ENCODE measurements at regions of chr7 and their contacts with region 1.

Region 1: DNA sequence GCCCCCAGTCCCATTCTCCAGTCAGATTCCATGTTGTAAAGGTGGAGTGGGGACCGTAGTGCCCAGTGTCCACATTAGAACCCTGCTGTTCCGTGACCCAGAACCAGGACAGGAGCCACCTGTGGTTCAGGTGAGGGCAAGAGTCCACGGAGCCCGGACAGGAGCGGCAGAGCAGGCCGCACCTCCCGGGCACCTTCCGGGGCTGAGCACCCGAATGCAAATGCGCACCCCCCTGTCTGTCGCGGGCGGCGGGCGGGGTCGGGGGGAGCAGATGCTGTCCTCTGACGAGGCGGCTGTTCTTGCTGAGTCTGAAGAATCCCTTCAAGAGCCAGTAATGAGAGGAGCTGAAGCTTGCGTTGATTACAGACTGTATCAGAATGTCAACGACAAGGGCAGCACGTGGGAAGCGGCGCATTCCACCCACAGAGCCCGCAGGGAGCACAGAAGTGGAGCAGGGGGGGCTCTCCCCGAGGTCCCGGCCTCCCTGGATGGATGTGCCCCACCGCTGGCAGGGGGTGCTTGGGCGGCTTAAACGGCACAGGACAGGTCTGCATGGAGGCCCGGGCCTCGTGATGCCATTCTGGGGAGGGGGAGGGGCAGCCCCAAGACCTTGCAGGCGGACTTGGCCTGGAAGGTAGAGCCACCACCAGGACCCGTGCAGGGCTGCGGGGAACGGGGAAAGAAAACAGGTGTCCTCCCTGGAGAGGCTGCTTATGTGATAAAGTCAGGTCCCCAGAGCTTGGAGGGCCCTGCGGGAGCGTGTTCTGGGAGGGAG is 407.5 kb upstream of the RNF32 start:
- DNase-seq: no peak
- ATAC-seq: no peak
- H3K4me3 ChIP-seq: no peak overlapping the region
- H3K27ac ChIP-seq: no peak overlapping the region
- H3K4me1 ChIP-seq: no peaks in the 10 kb centered on the region
- H3K27me3 ChIP-seq: no peaks in the 10 kb centered on the region
- CTCF ChIP-seq: no peak
- POLR2A ChIP-seq: no peak

Region 2: GRCh38 chr7:155227981-155228811 is 1004.9 kb before region 1 on chr7:
- intact Hi-C with region 1: loop called in 1 of 10 experiments (anchors 10 kb)
- DNase-seq: peak in 2 of 5 donors; percentile 39 to 50
- ATAC-seq: peak in 1 of 4 donors; percentile 67
- H3K4me3 ChIP-seq: no peak overlapping the region
- H3K27ac ChIP-seq: no peak overlapping the region
- H3K4me1 ChIP-seq: no peaks in the 10 kb centered on the region
- H3K27me3 ChIP-seq: peaks cover 0 to 20% (median 0%) of the 10 kb centered on the region in 9 donors
- CTCF ChIP-seq: no peak
- POLR2A ChIP-seq: no peak

Region 3: GRCh38 chr7:155965015-155965414 is 268.1 kb before region 1 on chr7:
- intact Hi-C with region 1: loop called in 1 of 10 experiments (anchors 5 kb)
- DNase-seq: no peak
- ATAC-seq: no peak
- H3K4me3 ChIP-seq: no peak overlapping the region
- H3K27ac ChIP-seq: no peak overlapping the region
- H3K4me1 ChIP-seq: no peaks in the 10 kb centered on the region
- H3K27me3 ChIP-seq: peaks cover 0 to 9% (median 3%) of the 10 kb centered on the region in 9 donors
- CTCF ChIP-seq: no peak
- POLR2A ChIP-seq: no peak

Region 4: DNA sequence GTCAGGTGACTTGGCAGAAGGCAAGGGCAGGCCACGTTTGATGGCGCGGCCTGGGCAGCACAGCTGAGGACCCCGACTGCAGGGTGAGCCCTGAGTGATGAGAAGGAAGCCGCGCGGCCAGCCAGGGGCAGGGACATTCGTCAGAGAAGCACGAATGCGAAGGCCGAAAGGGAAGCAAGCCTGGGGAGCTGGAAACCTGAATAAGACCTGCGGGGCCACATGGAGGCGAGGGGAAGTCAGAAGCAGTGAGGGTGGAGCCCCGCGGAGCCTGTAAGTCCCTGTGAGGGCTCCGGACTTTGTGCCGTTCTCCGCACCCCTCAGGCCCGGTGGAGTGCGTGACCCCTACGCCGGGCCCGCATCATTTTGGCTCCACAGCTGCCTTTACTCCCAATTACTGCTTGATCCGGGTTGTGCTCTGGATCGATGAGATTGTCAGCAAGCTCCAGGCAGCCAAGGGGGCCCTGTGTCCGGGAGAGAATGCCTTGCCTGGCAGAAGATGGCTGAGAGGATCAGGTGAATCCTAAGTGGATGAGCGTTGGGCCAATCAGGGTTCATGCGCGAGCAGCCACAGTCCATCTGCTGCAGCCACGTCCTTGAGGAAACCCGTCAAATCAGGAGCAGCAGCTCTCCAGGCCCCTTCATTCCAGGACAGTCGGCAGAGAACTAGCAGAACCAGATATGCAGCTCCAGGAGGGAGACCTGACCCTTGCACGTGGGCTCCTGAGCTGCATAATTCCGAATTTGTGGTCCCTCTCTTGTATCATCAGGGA is 127.6 kb before region 1 on chr7:
- intact Hi-C with region 1: no loop called
- DNase-seq: no peak
- ATAC-seq: no peak
- H3K4me3 ChIP-seq: no peak overlapping the region
- H3K27ac ChIP-seq: no peak overlapping the region
- H3K4me1 ChIP-seq: no peaks in the 10 kb centered on the region
- H3K27me3 ChIP-seq: peaks cover 0 to 22% (median 0%) of the 10 kb centered on the region in 9 donors
- CTCF ChIP-seq: no peak
- POLR2A ChIP-seq: no peak

Region 5: GRCh38 chr7:156209084-156209483 is 24.0 kb before region 1 on chr7:
- intact Hi-C with region 1: no loop called
- DNase-seq: no peak
- ATAC-seq: no peak
- H3K4me3 ChIP-seq: no peak overlapping the region
- H3K27ac ChIP-seq: no peak overlapping the region
- H3K4me1 ChIP-seq: no peaks in the 10 kb centered on the region
- H3K27me3 ChIP-seq: peaks cover 0 to 11% (median 0%) of the 10 kb centered on the region in 9 donors
- CTCF ChIP-seq: no peak
- POLR2A ChIP-seq: no peak

Region 6: DNA sequence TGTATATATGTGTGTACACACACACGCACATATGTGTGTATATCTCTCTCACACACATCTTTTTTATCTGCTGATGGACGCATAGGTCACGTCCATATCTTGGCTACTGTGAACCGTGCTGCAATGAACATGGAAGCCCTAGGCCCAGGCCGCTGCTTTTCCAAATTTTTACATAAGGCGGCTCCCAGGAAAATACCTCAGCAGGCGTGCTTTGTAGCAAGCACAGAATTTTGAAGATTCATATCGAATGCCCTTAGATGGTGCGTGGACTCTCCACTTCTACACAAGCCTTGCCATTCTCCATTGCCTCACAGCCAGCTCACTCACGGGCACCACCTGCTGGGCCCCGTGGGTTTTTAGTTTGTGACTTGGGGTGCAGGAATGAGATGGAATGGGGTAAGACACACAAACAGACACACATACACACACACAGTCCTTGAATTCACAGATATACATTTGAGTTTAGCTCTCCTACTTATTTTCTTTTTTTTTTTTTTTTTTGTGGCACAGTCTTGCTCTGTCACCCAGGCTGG is 349.5 kb after region 1 on chr7:
- intact Hi-C with region 1: no loop called
- DNase-seq: no peak
- ATAC-seq: no peak
- H3K4me3 ChIP-seq: no peak overlapping the region
- H3K27ac ChIP-seq: no peak overlapping the region
- H3K4me1 ChIP-seq: no peaks in the 10 kb centered on the region
- H3K27me3 ChIP-seq: peaks cover 0 to 6% (median 0%) of the 10 kb centered on the region in 9 donors
- CTCF ChIP-seq: no peak
- POLR2A ChIP-seq: no peak

Measured in heart left ventricle (tissue), 16 donors.